Prostate gland (tissue), 2 donors: ENCODE measurements at regions of chr12 and their contacts with region 1.

Region 1: DNA sequence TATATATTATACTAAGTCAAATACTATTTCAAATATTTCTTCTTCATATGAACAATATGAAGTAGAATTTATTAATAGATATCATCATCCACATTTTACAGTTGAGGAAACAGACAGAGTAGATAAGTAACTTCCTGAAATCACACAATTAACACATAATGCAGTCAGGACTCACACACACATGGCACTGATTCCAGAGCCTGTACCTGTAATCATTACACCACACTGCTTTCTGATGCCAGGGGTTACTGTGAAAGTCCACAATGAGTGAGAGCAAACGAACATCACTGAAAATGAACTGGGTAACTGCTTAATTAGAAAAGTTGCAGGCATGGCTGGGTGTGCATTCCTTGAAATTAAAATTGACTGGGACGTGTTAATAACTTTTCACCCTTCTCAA is 169.3 kb upstream of the IFNG-AS1 start:
- DNase-seq: no peak
- H3K4me3 ChIP-seq: no peak overlapping the region
- H3K27ac ChIP-seq: no peak overlapping the region
- H3K4me1 ChIP-seq: no peaks in the 10 kb centered on the region
- H3K27me3 ChIP-seq: no peaks in the 10 kb centered on the region
- CTCF ChIP-seq: no peak
- POLR2A ChIP-seq: no peak

Region 2: GRCh38 chr12:67517181-67517887 is 302.6 kb before region 1 on chr12:
- intact Hi-C with region 1: no loop called
- DNase-seq: peak; percentile 42
- H3K4me3 ChIP-seq: no peak overlapping the region
- H3K27ac ChIP-seq: no peak overlapping the region
- H3K4me1 ChIP-seq: no peaks in the 10 kb centered on the region
- H3K27me3 ChIP-seq: no peaks in the 10 kb centered on the region
- CTCF ChIP-seq: no peak
- POLR2A ChIP-seq: no peak

Region 3: GRCh38 chr12:67772276-67773169 is 47.4 kb before region 1 on chr12:
- intact Hi-C with region 1: loop called (anchors 5 kb)
- DNase-seq: no peak
- H3K4me3 ChIP-seq: no peak overlapping the region
- H3K27ac ChIP-seq: no peak overlapping the region
- H3K4me1 ChIP-seq: no peaks in the 10 kb centered on the region
- H3K27me3 ChIP-seq: no peaks in the 10 kb centered on the region
- CTCF ChIP-seq: no peak
- POLR2A ChIP-seq: no peak

Region 4: GRCh38 chr12:67784831-67785230 is 35.1 kb before region 1 on chr12:
- intact Hi-C with region 1: no loop called
- DNase-seq: no peak
- H3K4me3 ChIP-seq: no peak overlapping the region
- H3K27ac ChIP-seq: no peak overlapping the region
- H3K4me1 ChIP-seq: no peaks in the 10 kb centered on the region
- H3K27me3 ChIP-seq: no peaks in the 10 kb centered on the region
- CTCF ChIP-seq: no peak
- POLR2A ChIP-seq: no peak

Region 5: GRCh38 chr12:67991158-67991557 is 171.3 kb after region 1 on chr12:
- intact Hi-C with region 1: no loop called
- DNase-seq: no peak
- H3K4me3 ChIP-seq: no peak overlapping the region
- H3K27ac ChIP-seq: no peak overlapping the region
- H3K4me1 ChIP-seq: no peaks in the 10 kb centered on the region
- H3K27me3 ChIP-seq: no peaks in the 10 kb centered on the region
- CTCF ChIP-seq: no peak
- POLR2A ChIP-seq: no peak

Region 6: DNA sequence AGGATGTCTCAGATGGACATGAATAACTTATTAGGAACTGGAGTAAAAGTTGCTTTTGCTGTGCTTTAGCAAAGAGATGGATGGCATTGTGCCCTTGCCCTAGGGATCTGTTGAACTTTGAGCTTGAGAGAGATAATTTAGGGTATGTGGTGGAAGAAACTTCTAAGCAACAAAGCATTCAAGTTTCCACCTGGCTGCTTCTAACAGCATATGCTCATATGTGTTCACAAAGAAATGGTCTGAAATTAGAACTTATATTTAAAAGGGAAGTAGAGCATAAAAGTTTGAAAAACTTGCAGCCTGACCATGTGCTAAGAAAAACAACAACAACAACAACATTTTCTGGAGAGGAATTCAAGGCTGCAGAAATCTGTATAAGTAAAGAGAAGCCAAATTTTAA is 1411.6 kb after region 1 on chr12:
- intact Hi-C with region 1: no loop called
- DNase-seq: no peak
- H3K4me3 ChIP-seq: no peak overlapping the region
- H3K27ac ChIP-seq: no peak overlapping the region
- H3K4me1 ChIP-seq: no peaks in the 10 kb centered on the region
- H3K27me3 ChIP-seq: no peaks in the 10 kb centered on the region
- CTCF ChIP-seq: no peak
- POLR2A ChIP-seq: no peak